A549 (cell line): ENCODE measurements at regions of chr12 and their contacts with region 1.

Region 1: GRCh38 chr12:93502802-93503623 is 35.7 kb downstream of the MRPL42 start:
- DNase-seq: peak in 1 of 2 experiments; percentile 52
- ATAC-seq: peak; percentile 39 to 70; a peak in 3 of 6 replicates
- H3K4me3 ChIP-seq: no peak overlapping the region
- H3K27ac ChIP-seq: no peak overlapping the region
- H3K4me1 ChIP-seq: no peaks in the 10 kb centered on the region
- CTCF ChIP-seq: peak; percentile 97
- EP300 ChIP-seq: no peak
- POLR2A ChIP-seq: no peak
- RAD21 ChIP-seq: peak; percentile 94 to 96

Region 2: DNA sequence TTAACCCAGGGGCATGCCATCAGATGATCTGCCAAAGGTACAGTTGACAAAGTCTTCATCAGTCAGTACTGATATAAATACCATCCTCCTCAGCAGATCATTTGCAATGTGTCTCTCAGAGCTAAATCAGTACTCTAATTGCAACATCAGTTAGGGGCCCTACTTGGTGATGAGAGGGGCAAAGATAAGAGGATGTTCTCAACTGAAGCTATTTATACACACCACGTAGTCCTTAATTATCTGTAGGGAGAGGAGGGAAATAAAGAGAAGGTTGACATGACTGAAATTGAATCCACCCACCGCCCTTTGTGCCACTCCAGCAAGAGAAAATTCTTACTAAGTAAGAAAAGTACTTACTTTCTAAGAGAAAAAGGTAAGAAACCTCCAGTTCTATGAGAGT is 283.1 kb before region 1 on chr12:
- CTCF ChIA-PET with region 1: no interaction called
- POLR2A ChIA-PET with region 1: no interaction called
- DNase-seq: no peak
- ATAC-seq: no peak
- H3K4me3 ChIP-seq: no peak overlapping the region
- H3K27ac ChIP-seq: no peak overlapping the region
- H3K4me1 ChIP-seq: no peaks in the 10 kb centered on the region
- CTCF ChIP-seq: no peak
- EP300 ChIP-seq: no peak
- POLR2A ChIP-seq: no peak
- RAD21 ChIP-seq: no peak

Region 3: GRCh38 chr12:93514853-93515252 is 11.8 kb after region 1 on chr12:
- CTCF ChIA-PET with region 1: interaction called, 76 read pairs
- POLR2A ChIA-PET with region 1: interaction called, 7 read pairs
- DNase-seq: no peak
- ATAC-seq: peak; percentile 30 to 68; a peak in 3 of 6 replicates
- H3K4me3 ChIP-seq: no peak overlapping the region
- H3K27ac ChIP-seq: no peak overlapping the region
- H3K4me1 ChIP-seq: peaks cover 14% of the 10 kb centered on the region; the same call in 1 of the 3 replicates
- CTCF ChIP-seq: no peak
- EP300 ChIP-seq: no peak
- POLR2A ChIP-seq: no peak
- RAD21 ChIP-seq: no peak

Region 4: GRCh38 chr12:93563807-93564538 is 61.0 kb after region 1 on chr12:
- CTCF ChIA-PET with region 1: interaction called, 33 read pairs
- POLR2A ChIA-PET with region 1: interaction called, 6 read pairs
- DNase-seq: peak; percentile 76 to 89
- ATAC-seq: peak; percentile 96 to 97
- H3K4me3 ChIP-seq: no peak overlapping the region
- H3K27ac ChIP-seq: peak overlapping the region; percentile 63 to 77
- H3K4me1 ChIP-seq: peaks cover 27% of the 10 kb centered on the region
- CTCF ChIP-seq: peak; percentile 53
- EP300 ChIP-seq: peak; percentile 48 to 73; a peak in 2 of 5 replicates
- POLR2A ChIP-seq: no peak
- RAD21 ChIP-seq: peak; percentile 52 to 70

Region 5: DNA sequence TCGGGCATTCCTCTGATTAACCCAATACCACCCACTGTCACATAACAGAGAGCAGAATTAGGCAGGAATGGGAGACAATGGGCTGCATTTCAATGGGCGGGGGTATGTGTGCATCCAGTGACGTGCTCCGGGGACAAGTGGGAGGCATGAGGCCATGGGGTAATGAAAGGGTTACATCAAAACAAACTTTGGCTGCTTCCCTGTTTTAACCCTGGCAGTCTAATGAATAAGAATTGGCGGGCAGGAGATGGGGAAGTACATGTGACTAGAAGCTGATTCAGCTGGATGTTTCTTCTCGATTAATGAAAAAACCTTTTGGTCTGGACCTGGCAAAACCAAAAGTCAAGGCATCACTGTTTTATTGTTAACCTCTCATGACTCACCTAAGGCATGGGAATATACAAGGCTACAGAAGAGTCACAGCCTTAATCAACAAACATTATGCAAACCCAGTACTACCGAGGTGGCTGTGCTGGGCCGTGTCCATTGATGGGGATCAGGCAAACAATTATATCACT is 113.6 kb after region 1 on chr12:
- CTCF ChIA-PET with region 1: no interaction called
- POLR2A ChIA-PET with region 1: no interaction called
- DNase-seq: peak; percentile 11 to 23
- ATAC-seq: peak; percentile 48 to 56; a peak in 2 of 6 replicates
- H3K4me3 ChIP-seq: no peak overlapping the region
- H3K27ac ChIP-seq: no peak overlapping the region
- H3K4me1 ChIP-seq: no peaks in the 10 kb centered on the region
- CTCF ChIP-seq: no peak
- EP300 ChIP-seq: no peak
- POLR2A ChIP-seq: no peak
- RAD21 ChIP-seq: no peak

Region 6: DNA sequence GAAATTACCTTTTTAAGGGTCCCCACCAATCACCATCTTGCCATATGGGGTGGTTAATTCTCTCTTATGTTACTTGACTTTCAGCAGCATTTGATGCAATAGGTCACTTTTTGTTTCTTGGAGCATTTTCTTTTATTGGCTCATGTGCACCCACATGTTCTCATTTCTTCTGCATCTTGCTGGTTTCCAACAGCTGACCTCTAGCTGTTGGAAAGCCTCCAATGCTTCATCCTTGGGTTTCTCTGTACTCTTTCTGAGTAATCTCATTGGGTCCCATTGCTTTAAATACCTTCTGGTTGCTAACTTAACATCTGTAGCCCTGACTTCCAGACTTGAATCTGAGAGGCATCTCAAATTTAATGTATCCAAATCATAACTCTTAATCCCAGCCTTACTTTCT is 291.0 kb after region 1 on chr12:
- CTCF ChIA-PET with region 1: no interaction called
- POLR2A ChIA-PET with region 1: no interaction called
- DNase-seq: no peak
- ATAC-seq: no peak
- H3K4me3 ChIP-seq: no peak overlapping the region
- H3K27ac ChIP-seq: peak overlapping the region in 1 of 2 experiments; percentile 27; a peak in 1 of 6 replicates
- H3K4me1 ChIP-seq: peaks cover 13% of the 10 kb centered on the region
- CTCF ChIP-seq: no peak
- EP300 ChIP-seq: no peak
- POLR2A ChIP-seq: no peak
- RAD21 ChIP-seq: no peak